Caco-2 (cell line): ENCODE measurements at regions of chr22 and their contacts with region 1.

Region 1: GRCh38 chr22:24805790-24806662 is at the start of gene SGSM1:
- DNase-seq: peak; percentile 87 to 94
- H3K4me3 ChIP-seq: peak within 1 kb of the TSS; percentile 85
- H3K4me3 Mint-ChIP-seq: peak within 1 kb of the TSS; percentile 32
- H3K27ac Mint-ChIP-seq: no peak within 1 kb of the TSS
- H3K4me1 ChIP-seq: peaks cover 24% of the 10 kb centered on the region
- H3K4me1 Mint-ChIP-seq: peaks cover 31% of the 10 kb centered on the region
- H3K27me3 ChIP-seq: no peaks in the 10 kb centered on the region
- H3K27me3 Mint-ChIP-seq: no peaks in the 10 kb centered on the region
- CTCF ChIP-seq: no peak
- total RNA-seq, gene SGSM1: 5.5 and 6.1 TPM in 2 replicates

Region 2: GRCh38 chr22:24768537-24769374 is 37.3 kb before region 1 on chr22:
- CTCF ChIA-PET with region 1: interaction called, 19 read pairs
- POLR2A ChIA-PET with region 1: interaction called, 3 read pairs
- intact Hi-C with region 1: loop called (anchors 5 kb)
- DNase-seq: peak; percentile 69 to 76
- H3K4me3 ChIP-seq: no peak overlapping the region
- H3K4me3 Mint-ChIP-seq: no peak overlapping the region
- H3K27ac Mint-ChIP-seq: no peak overlapping the region
- H3K4me1 ChIP-seq: peaks cover 14% of the 10 kb centered on the region
- H3K4me1 Mint-ChIP-seq: peaks cover 13% of the 10 kb centered on the region
- H3K27me3 ChIP-seq: no peaks in the 10 kb centered on the region
- H3K27me3 Mint-ChIP-seq: no peaks in the 10 kb centered on the region
- CTCF ChIP-seq: peak; percentile 79 to 80

Region 3: GRCh38 chr22:24775754-24776492 is 30.1 kb before region 1 on chr22:
- CTCF ChIA-PET with region 1: interaction called, 9 read pairs
- POLR2A ChIA-PET with region 1: interaction called, 10 read pairs
- intact Hi-C with region 1: loop called (anchors 1 kb)
- DNase-seq: peak; percentile 78 to 86
- H3K4me3 ChIP-seq: no peak overlapping the region
- H3K4me3 Mint-ChIP-seq: peak overlapping the region; percentile 55
- H3K27ac Mint-ChIP-seq: peak overlapping the region; percentile 88
- H3K4me1 ChIP-seq: peaks cover 46% of the 10 kb centered on the region
- H3K4me1 Mint-ChIP-seq: peaks cover 36% of the 10 kb centered on the region
- H3K27me3 ChIP-seq: no peaks in the 10 kb centered on the region
- H3K27me3 Mint-ChIP-seq: no peaks in the 10 kb centered on the region
- CTCF ChIP-seq: no peak

Region 4: DNA sequence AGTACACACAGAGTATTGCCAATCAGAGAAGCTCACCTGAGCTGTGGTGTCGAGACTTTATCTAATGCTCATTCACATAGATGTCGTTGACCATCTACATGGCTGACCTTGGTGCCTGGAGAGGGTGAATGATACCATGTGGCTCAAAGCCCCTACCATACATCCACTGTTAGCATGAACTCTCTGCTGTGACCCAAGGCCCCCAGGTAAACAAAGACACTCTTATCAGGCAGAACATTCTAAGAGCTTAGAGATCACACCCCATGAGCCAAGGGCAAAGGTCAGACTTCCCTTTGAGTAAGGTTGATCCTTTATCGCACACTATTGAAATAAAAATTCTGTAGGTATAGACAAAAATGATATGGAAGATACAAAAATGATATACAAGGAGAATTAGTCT is 16.5 kb before region 1 on chr22:
- CTCF ChIA-PET with region 1: interaction called, 9 read pairs
- POLR2A ChIA-PET with region 1: interaction called, 3 read pairs
- intact Hi-C with region 1: loop called (anchors 1 kb)
- DNase-seq: peak; percentile 38 to 60
- H3K4me3 ChIP-seq: no peak overlapping the region
- H3K4me3 Mint-ChIP-seq: peak overlapping the region; percentile 41
- H3K27ac Mint-ChIP-seq: peak overlapping the region; percentile 63
- H3K4me1 ChIP-seq: peaks cover 19% of the 10 kb centered on the region
- H3K4me1 Mint-ChIP-seq: peaks cover 16% of the 10 kb centered on the region
- H3K27me3 ChIP-seq: no peaks in the 10 kb centered on the region
- H3K27me3 Mint-ChIP-seq: no peaks in the 10 kb centered on the region
- CTCF ChIP-seq: no peak

Region 5: GRCh38 chr22:24834845-24835570 is 29.0 kb after region 1 on chr22:
- CTCF ChIA-PET with region 1: interaction called, 4 read pairs
- POLR2A ChIA-PET with region 1: no interaction called
- intact Hi-C with region 1: loop called (anchors 1 kb)
- DNase-seq: peak in 1 of 2 experiments; percentile 52
- H3K4me3 ChIP-seq: no peak overlapping the region
- H3K4me3 Mint-ChIP-seq: no peak overlapping the region
- H3K27ac Mint-ChIP-seq: peak overlapping the region; percentile 2
- H3K4me1 ChIP-seq: no peaks in the 10 kb centered on the region
- H3K4me1 Mint-ChIP-seq: peaks cover 18% of the 10 kb centered on the region
- H3K27me3 ChIP-seq: no peaks in the 10 kb centered on the region
- H3K27me3 Mint-ChIP-seq: no peaks in the 10 kb centered on the region
- CTCF ChIP-seq: peak; percentile 38 to 57

Region 6: DNA sequence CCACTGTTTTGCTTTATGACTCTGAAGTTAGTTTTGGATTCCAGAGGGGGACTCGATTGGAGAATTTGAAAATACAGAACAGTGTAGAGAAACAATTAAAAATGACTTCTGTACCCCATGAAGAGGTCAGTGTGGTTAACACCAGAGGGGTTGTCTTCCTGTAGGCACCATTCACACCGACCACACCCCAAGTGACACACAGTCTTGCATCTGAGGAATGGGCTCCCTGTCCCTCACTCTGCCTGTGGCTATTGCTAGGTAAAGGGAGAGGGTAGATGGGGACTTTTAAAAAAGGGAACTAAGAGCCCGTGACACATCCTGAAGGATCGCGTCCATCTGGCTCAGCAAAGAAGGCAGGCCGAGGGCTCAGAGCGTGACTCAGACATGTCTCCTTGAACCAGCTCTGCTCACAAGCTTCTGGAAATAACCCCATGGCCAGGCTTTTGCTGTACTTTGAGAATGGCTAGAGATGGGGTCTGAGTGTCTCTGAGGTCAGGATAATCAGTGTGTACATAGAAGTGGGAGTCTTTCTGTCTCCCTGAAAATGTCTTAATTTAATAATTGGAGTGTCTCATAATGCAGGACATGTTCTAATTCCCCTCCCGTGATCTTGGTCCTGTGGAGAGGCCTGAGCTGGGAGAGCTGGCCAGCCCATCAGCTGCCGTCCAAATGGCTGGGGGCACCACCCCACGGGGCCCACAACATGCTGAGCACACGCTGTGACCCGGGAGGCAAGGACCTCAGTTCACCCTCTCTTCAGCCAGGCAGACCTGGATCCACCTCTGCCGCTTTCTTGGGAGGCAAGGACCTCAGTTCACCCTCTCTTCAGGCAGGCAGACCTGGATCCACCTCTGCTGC is 39.2 kb after region 1 on chr22:
- CTCF ChIA-PET with region 1: interaction called, 4 read pairs
- POLR2A ChIA-PET with region 1: no interaction called
- intact Hi-C with region 1: loop called (anchors 2 kb)
- DNase-seq: no peak
- H3K4me3 ChIP-seq: no peak overlapping the region
- H3K4me3 Mint-ChIP-seq: no peak overlapping the region
- H3K27ac Mint-ChIP-seq: no peak overlapping the region
- H3K4me1 ChIP-seq: no peaks in the 10 kb centered on the region
- H3K4me1 Mint-ChIP-seq: peaks cover 4% of the 10 kb centered on the region
- H3K27me3 ChIP-seq: no peaks in the 10 kb centered on the region
- H3K27me3 Mint-ChIP-seq: no peaks in the 10 kb centered on the region
- CTCF ChIP-seq: no peak

Region 7: DNA sequence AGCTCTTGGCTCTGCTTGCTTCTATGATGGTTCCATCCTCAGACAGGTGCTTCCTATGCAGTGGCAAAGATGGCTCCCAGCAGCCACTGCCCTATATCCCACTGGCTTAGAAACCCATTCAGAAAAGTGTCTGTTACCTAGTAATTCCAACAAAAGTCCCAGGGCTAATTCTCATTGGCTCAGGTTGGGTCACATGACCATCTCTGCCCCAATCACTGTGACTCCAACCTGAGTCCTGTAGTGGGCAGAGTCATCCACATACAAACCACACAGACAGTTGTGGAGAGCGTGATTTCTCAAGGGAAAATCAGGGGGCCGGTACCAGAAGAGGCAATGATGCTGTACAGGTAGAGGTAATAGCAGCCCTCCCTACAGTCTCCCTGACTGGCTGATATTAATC is 72.9 kb after region 1 on chr22:
- CTCF ChIA-PET with region 1: no interaction called
- POLR2A ChIA-PET with region 1: interaction called, 10 read pairs
- intact Hi-C with region 1: no loop called
- DNase-seq: no peak
- H3K4me3 ChIP-seq: no peak overlapping the region
- H3K4me3 Mint-ChIP-seq: no peak overlapping the region
- H3K27ac Mint-ChIP-seq: no peak overlapping the region
- H3K4me1 ChIP-seq: no peaks in the 10 kb centered on the region
- H3K4me1 Mint-ChIP-seq: no peaks in the 10 kb centered on the region
- H3K27me3 ChIP-seq: no peaks in the 10 kb centered on the region
- H3K27me3 Mint-ChIP-seq: no peaks in the 10 kb centered on the region
- CTCF ChIP-seq: no peak